ENCODE measurements at regions of chr12 and their contacts with region 1.

Region 1: GRCh38 chr12:53746592-53747092 is 5.1 kb downstream of the CISTR start:
- DNase-seq: peak; percentile 91
- H3K4me3 Mint-ChIP-seq: no peak overlapping the region
- H3K27ac Mint-ChIP-seq: no peak overlapping the region
- H3K4me1 Mint-ChIP-seq: peaks cover 17% of the 10 kb centered on the region
- H3K27me3 Mint-ChIP-seq: peaks cover 37% of the 10 kb centered on the region

Region 2: DNA sequence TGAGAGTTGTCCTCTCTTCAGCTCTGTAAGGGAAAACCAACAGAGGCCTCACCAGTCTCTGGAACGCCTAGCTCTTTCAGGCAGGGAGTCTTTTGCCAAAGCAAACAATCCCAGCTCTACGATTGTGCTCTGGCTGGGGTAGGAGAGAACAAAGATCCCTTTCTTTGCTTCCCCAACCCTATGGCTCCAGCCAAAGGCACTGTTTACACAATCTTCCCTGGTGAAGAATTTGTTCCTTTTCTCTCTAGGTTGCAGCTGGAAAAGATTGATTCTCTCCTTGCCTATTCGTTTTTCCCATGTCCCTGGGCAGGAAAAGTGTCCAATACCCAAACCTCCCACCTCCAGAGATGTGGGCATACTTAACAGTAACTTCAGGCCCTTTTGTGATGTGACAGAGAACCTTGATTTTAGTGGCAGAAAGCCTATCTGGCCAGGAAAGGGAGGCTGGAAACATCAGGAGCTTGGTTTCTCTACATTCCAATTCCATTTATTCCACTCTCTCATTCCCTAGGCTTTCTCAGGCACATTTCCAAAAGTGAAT is 87.6 kb before region 1 on chr12:
- CTCF ChIA-PET with region 1: no interaction called
- POLR2A ChIA-PET with region 1: no interaction called
- DNase-seq: no peak
- H3K4me3 Mint-ChIP-seq: no peak overlapping the region
- H3K27ac Mint-ChIP-seq: no peak overlapping the region
- H3K4me1 Mint-ChIP-seq: no peaks in the 10 kb centered on the region
- H3K27me3 Mint-ChIP-seq: no peaks in the 10 kb centered on the region

Region 3: GRCh38 chr12:53675651-53676453 is 70.8 kb before region 1 on chr12 and contains the start of gene ATP5MC2:
- CTCF ChIA-PET with region 1: interaction called, 18 read pairs
- POLR2A ChIA-PET with region 1: no interaction called
- DNase-seq: peak; percentile 97
- H3K4me3 Mint-ChIP-seq: peak within 1 kb of the TSS; percentile 92
- H3K27ac Mint-ChIP-seq: peak within 1 kb of the TSS; percentile 97
- H3K4me1 Mint-ChIP-seq: peaks cover 39% of the 10 kb centered on the region
- H3K27me3 Mint-ChIP-seq: peaks cover 29% of the 10 kb centered on the region
- total RNA-seq, gene ATP5MC2: 298 to 356 TPM

Region 4: DNA sequence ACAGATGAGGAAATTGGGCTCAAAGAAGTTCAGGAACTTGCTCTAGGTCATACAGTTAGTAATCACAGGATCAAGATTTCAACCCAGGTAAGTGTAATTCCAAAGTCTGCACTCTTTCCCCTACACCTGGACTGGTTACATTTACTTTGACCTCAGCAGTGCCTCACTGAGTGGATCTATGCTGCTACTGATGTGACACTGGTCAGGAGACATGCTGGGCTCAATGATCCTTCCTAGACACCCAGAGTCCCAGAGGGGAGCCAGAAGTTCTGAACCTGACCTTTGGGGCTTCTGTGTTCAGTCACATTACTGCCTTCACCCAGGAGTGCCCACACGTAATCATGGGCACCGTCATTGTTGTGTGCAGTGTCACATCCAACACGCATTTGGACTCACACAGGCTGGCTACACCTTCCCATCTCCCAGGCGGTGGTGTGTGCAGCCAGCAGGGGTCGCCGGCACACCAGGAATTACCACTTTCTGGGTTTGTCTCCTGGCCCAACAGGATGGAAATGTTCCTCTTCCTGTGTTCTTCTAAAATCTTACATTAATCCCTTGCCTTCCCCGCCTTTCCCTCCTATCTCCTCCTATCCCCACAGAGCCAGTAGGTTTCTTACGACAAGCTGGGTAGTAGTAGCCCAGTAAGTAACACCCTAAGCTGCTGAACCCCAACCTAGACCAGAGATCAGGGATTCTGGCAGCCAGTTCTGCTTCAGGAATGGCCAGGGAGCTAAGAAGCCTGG is 45.0 kb before region 1 on chr12:
- CTCF ChIA-PET with region 1: interaction called, 110 read pairs
- POLR2A ChIA-PET with region 1: no interaction called
- DNase-seq: peak; percentile 75
- H3K4me3 Mint-ChIP-seq: no peak overlapping the region
- H3K27ac Mint-ChIP-seq: peak overlapping the region; percentile 50
- H3K4me1 Mint-ChIP-seq: peaks cover 7% of the 10 kb centered on the region
- H3K27me3 Mint-ChIP-seq: peaks cover 84% of the 10 kb centered on the region

Region 5: DNA sequence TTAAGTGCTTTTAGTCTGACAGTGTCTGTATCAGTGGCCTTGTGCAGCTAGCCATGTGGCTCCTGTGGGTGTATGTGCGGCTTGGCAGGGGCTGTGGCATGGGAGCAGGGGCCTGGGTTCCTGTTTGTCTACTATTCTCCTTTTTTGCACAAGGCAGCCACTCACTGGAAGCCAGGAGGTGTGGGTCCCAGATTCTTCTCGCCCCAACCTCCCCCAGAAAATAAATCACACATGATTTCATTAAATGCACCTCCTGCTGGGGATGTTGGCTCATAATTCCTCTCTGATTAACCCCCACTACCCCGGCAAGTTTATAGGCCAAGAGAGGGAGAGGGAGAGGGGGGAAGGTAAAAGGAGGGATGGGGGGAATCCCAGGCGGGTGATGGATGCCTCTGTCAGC is 37.0 kb before region 1 on chr12:
- CTCF ChIA-PET with region 1: interaction called, 25 read pairs
- POLR2A ChIA-PET with region 1: no interaction called
- DNase-seq: no peak
- H3K4me3 Mint-ChIP-seq: no peak overlapping the region
- H3K27ac Mint-ChIP-seq: no peak overlapping the region
- H3K4me1 Mint-ChIP-seq: no peaks in the 10 kb centered on the region
- H3K27me3 Mint-ChIP-seq: peaks cover 28% of the 10 kb centered on the region

Region 6: DNA sequence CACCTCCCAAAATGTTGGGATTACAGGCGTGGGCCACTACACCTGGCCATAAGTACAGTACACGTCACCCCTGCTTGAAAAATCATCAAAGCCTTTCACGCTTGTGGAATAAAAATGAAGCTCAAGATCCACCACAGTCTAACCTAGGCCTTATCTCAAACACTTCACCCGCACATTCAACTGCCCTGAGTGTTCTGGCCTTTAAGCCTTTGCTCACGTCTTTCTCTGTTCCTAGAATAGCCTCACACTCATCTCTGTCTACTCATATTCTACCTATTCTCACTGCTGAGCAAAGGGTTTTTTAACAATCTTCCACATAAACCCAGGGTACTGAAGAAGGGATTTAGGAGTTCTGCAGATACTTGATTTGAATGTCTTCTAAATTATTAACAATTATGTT is 29.3 kb before region 1 on chr12:
- CTCF ChIA-PET with region 1: interaction called, 18 read pairs
- POLR2A ChIA-PET with region 1: no interaction called
- DNase-seq: no peak
- H3K4me3 Mint-ChIP-seq: no peak overlapping the region
- H3K27ac Mint-ChIP-seq: no peak overlapping the region
- H3K4me1 Mint-ChIP-seq: no peaks in the 10 kb centered on the region
- H3K27me3 Mint-ChIP-seq: no peaks in the 10 kb centered on the region

Region 7: DNA sequence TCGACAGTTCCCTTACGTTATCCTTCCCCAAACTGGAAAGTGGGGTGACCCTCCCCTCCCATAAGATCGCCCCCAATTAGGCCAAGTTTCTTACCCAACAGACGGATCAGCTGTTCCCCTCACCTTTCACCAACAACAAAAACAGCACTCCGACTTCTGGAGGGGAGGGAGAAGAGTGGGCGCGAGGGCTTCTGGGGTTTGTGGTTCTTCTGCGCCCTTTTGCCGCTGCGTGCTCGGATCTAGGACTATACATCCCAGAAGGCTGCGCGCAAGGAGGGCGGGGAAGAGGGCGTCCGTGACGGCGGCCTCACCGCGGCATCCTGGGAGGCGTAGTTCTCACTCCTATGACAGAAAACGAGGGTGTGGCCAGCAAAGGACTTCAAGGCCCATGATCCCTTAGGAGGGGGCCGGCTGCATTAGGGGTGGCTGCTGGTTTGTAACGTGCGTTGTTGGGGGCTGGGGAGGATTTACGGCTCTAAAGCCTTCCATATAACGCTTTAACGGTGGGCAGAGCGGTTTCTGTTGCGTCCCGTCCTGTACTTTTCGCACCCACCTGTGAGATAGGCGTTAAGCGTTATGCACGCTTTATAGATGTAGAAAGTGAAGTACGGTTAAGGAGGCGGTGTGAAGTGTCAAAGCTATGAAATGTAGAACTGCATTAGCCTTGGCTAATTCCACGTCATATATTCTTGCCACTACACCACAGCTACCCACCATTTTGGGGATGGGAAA is 19.2 kb before region 1 on chr12 and contains the start of gene CALCOCO1:
- CTCF ChIA-PET with region 1: interaction called, 155 read pairs
- POLR2A ChIA-PET with region 1: no interaction called
- DNase-seq: peak; percentile 98
- H3K4me3 Mint-ChIP-seq: peak within 1 kb of the TSS; percentile 91
- H3K27ac Mint-ChIP-seq: peak within 1 kb of the TSS; percentile 95
- H3K4me1 Mint-ChIP-seq: peaks cover 31% of the 10 kb centered on the region
- H3K27me3 Mint-ChIP-seq: no peaks in the 10 kb centered on the region
- total RNA-seq, gene CALCOCO1: 54.6 to 56.8 TPM

Region 8: DNA sequence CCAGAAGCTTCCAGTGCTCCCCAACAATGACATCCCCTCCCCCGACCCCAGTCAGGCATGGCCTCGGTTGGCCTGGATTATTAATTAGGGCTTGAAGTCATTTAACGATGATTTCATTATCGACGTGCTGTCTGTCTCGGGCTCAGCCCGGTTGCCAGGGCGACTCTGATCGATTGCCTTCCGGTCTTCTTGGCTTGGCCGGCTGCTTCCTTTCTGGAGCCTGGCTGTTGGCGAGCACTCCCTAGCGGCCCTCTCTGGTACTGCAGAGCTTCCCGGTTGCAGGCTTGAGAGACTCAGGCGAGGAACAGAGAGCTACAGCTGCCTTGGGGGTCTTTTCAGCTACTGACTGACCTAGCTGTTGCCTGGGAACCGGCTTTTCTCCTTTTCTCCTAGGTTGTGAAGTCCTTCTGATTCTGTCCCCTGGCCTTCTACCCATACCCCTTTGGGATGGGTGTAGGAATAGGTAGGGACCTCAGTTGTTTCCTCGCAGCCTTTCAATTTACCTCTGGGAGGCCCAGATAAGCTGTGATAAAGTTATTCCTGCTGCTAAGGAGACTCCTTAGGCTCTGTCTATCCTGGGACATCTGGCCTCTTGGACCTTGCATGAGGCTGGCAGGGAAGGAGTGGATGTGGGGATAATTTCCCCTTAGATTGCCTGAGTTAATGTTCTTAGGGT is 10.6 kb after region 1 on chr12:
- CTCF ChIA-PET with region 1: interaction called, 55 read pairs
- POLR2A ChIA-PET with region 1: no interaction called
- DNase-seq: peak; percentile 82
- H3K4me3 Mint-ChIP-seq: peak overlapping the region; percentile 12
- H3K27ac Mint-ChIP-seq: no peak overlapping the region
- H3K4me1 Mint-ChIP-seq: peaks cover 15% of the 10 kb centered on the region
- H3K27me3 Mint-ChIP-seq: peaks cover 36% of the 10 kb centered on the region

Region 9: DNA sequence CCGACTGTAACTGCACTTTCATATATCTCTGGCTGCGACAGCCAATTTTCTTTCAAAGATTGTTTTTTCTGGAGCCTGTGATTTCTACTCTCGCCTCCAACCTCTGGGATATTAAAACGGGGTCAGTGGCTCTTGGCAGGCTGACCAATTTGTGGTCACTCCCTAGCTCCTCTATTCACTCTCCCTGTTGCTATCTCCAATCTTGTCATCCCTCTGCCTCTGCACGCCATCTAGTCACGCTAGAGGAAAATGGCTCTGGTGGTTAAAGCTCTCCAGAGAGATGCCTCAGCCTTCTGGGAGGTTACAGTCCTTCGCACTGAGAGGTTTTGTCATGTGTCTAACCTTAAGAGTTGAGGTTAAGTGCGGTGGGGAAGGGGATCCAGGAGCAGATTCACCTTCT is 65.0 kb after region 1 on chr12:
- CTCF ChIA-PET with region 1: no interaction called
- POLR2A ChIA-PET with region 1: no interaction called
- DNase-seq: no peak
- H3K4me3 Mint-ChIP-seq: no peak overlapping the region
- H3K27ac Mint-ChIP-seq: no peak overlapping the region
- H3K4me1 Mint-ChIP-seq: no peaks in the 10 kb centered on the region
- H3K27me3 Mint-ChIP-seq: peaks cover 22% of the 10 kb centered on the region

Region 10: GRCh38 chr12:54033106-54033979 is 286.7 kb after region 1 on chr12:
- CTCF ChIA-PET with region 1: no interaction called
- POLR2A ChIA-PET with region 1: no interaction called
- DNase-seq: no peak
- H3K4me3 Mint-ChIP-seq: peak overlapping the region; percentile 32
- H3K27ac Mint-ChIP-seq: no peak overlapping the region
- H3K4me1 Mint-ChIP-seq: peaks cover 25% of the 10 kb centered on the region
- H3K27me3 Mint-ChIP-seq: peaks cover 85% of the 10 kb centered on the region

Measured in activated CD4-positive, alpha-beta T cell treated with anti-CD3 and anti-CD28 coated beads, Interleukin-2, amount 10 ng/mL, durations not matched to agents 7 days and 5 days (primary cell).